ENCODE measurements at regions of chr7 and their contacts with region 1.

Region 1: GRCh38 chr7:134690016-134690415 is 43.4 kb downstream of the BPGM start:
- DNase-seq: no peak
- H3K4me3 ChIP-seq: peak overlapping the region in 2 of 4 donors; percentile 6 to 34
- H3K27ac ChIP-seq: peak overlapping the region; percentile 66 to 82 (median 76)
- H3K4me1 ChIP-seq: peaks cover 0 to 11% (median 6%) of the 10 kb centered on the region in 4 donors
- H3K27me3 ChIP-seq: no peaks in the 10 kb centered on the region
- CTCF ChIP-seq: peak; percentile 20 to 60 (median 33)
- EP300 ChIP-seq: no peak
- POLR2A ChIP-seq: no peak

Region 2: GRCh38 chr7:134212576-134213546 is 477.2 kb before region 1 on chr7:
- in situ Hi-C with region 1: no loop called
- intact Hi-C with region 1: no loop called
- DNase-seq: no peak
- H3K4me3 ChIP-seq: no peak overlapping the region
- H3K27ac ChIP-seq: no peak overlapping the region
- H3K4me1 ChIP-seq: no peaks in the 10 kb centered on the region
- H3K27me3 ChIP-seq: no peaks in the 10 kb centered on the region
- CTCF ChIP-seq: no peak
- EP300 ChIP-seq: no peak
- POLR2A ChIP-seq: no peak

Region 3: DNA sequence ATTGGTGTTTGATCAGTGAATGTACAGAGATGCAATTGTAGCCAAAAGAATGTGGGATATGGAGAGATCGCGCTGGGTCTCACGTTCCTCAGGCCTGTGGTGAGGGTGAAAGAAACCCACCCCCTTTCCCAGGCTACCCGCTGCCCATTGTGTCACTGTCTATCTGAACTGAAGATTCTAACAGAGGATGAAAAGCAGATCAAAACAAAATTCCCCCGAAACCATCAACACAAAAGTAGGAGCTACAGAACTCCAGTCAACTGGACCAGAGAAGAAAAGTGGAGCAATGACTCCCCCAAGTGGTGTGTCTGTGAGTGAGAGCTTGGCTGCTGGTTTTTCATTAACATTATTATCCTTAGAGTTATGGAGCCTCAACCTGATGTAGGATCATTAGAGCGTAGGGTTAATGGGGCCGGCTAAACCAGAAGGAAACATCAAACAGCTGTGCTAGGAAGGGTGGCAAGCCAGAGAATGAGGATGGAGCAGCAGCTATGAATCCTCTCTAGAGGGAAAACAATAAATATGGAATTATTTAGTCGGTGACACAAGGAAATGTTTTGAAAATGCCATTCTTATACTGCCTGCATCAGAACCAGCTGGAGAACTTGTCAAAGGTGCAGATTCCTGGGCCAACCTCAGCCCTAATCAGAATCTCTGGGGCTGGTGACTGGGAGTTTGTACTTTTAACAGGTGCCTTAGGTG is 269.4 kb before region 1 on chr7:
- in situ Hi-C with region 1: no loop called
- intact Hi-C with region 1: no loop called
- DNase-seq: peak; percentile 54
- H3K4me3 ChIP-seq: no peak overlapping the region
- H3K27ac ChIP-seq: no peak overlapping the region
- H3K4me1 ChIP-seq: peaks cover 0 to 23% (median 0%) of the 10 kb centered on the region in 4 donors
- H3K27me3 ChIP-seq: no peaks in the 10 kb centered on the region
- CTCF ChIP-seq: peak; percentile 53 to 68 (median 58)
- EP300 ChIP-seq: no peak
- POLR2A ChIP-seq: no peak

Region 4: DNA sequence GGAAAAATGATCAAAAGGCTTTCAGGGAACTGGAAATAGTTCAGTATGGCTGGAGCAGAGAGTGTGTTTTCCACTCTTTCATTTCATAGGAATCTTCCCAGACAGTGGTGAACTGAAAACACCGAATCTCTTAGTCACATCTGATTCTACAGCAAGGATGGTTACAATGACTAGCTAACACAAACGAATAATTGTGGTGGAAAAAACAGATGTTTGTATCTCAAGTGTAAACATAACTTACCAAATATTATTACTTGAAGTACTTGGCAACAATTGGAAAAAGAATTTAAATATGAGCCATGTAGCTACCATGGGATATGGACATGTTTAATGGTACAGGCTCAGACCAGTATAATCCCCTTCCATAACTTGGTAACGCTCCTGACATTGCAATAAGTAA is 64.5 kb before region 1 on chr7:
- in situ Hi-C with region 1: no loop called
- intact Hi-C with region 1: no loop called
- DNase-seq: no peak
- H3K4me3 ChIP-seq: no peak overlapping the region
- H3K27ac ChIP-seq: no peak overlapping the region
- H3K4me1 ChIP-seq: no peaks in the 10 kb centered on the region
- H3K27me3 ChIP-seq: peaks cover 20% of the 10 kb centered on the region
- CTCF ChIP-seq: no peak
- EP300 ChIP-seq: no peak
- POLR2A ChIP-seq: no peak

Region 5: GRCh38 chr7:134741907-134742635 is 52.1 kb after region 1 on chr7:
- in situ Hi-C with region 1: no loop called
- intact Hi-C with region 1: loop called (anchors 10 kb)
- DNase-seq: no peak
- H3K4me3 ChIP-seq: no peak overlapping the region
- H3K27ac ChIP-seq: peak overlapping the region; percentile 67 to 76 (median 68)
- H3K4me1 ChIP-seq: peaks cover 0 to 7% (median 7%) of the 10 kb centered on the region in 4 donors
- H3K27me3 ChIP-seq: no peaks in the 10 kb centered on the region
- CTCF ChIP-seq: no peak
- EP300 ChIP-seq: no peak
- POLR2A ChIP-seq: no peak

Region 6: GRCh38 chr7:134943764-134944400 is 253.9 kb after region 1 on chr7:
- in situ Hi-C with region 1: no loop called
- intact Hi-C with region 1: loop called (anchors 10 kb)
- DNase-seq: no peak
- H3K4me3 ChIP-seq: no peak overlapping the region
- H3K27ac ChIP-seq: no peak overlapping the region
- H3K4me1 ChIP-seq: no peaks in the 10 kb centered on the region
- H3K27me3 ChIP-seq: no peaks in the 10 kb centered on the region
- CTCF ChIP-seq: no peak
- EP300 ChIP-seq: no peak
- POLR2A ChIP-seq: no peak

Region 7: GRCh38 chr7:134954197-134955082 is 264.4 kb after region 1 on chr7:
- in situ Hi-C with region 1: loop called in 1 of 4 experiments (anchors 25 kb)
- intact Hi-C with region 1: loop called (anchors 10 kb)
- DNase-seq: no peak
- H3K4me3 ChIP-seq: no peak overlapping the region
- H3K27ac ChIP-seq: no peak overlapping the region
- H3K4me1 ChIP-seq: no peaks in the 10 kb centered on the region
- H3K27me3 ChIP-seq: no peaks in the 10 kb centered on the region
- CTCF ChIP-seq: peak; percentile 39 to 55 (median 53)
- EP300 ChIP-seq: no peak
- POLR2A ChIP-seq: no peak

Region 8: GRCh38 chr7:135170274-135170997 is 480.4 kb after region 1 on chr7 and contains the start of gene CYREN:
- in situ Hi-C with region 1: loop called in 1 of 4 experiments (anchors 25 kb)
- intact Hi-C with region 1: loop called (anchors 10 kb)
- DNase-seq: peak; percentile 96
- H3K4me3 ChIP-seq: peak within 1 kb of the TSS; percentile 60 to 83 (median 69)
- H3K27ac ChIP-seq: peak within 1 kb of the TSS; percentile 92 to 97 (median 96)
- H3K4me1 ChIP-seq: peaks cover 13 to 36% (median 25%) of the 10 kb centered on the region in 4 donors
- H3K27me3 ChIP-seq: no peaks in the 10 kb centered on the region
- CTCF ChIP-seq: peak; percentile 61 to 77 (median 72)
- EP300 ChIP-seq: no peak
- POLR2A ChIP-seq: peak; percentile 77
- total RNA-seq, gene CYREN: 30.8 to 88.3 (median 37.8) TPM

Region 9: DNA sequence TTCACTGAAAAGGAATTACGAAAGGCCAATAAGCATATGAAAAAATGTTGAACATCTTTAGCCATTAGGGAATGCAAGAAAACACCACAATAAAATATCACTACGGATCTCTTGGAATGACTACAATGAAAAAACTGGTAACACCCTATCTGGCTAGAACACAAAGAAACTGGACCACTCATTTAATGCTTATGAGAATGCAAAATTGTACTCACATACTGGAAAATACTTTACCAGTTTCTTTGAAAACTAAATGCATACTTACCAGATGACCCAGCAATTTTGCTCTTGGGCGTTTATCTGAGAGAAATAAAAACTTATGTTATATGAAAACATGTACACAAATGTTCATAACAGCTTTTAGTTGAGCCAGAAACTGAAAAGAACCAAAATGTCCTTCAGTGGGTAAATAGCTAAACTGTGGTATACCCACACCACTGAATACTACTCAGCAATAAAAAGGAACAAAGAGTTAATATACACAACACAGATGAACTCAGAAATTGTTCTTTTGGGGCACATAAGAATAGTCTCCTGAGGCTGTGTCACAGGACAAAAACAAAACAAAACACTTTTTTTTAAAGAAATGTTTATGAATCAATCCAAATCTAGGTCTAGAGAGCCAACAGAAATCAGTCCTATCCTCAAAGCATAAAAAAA is 796.4 kb after region 1 on chr7:
- in situ Hi-C with region 1: no loop called
- intact Hi-C with region 1: no loop called
- DNase-seq: no peak
- H3K4me3 ChIP-seq: no peak overlapping the region
- H3K27ac ChIP-seq: no peak overlapping the region
- H3K4me1 ChIP-seq: peaks cover 0 to 15% (median 6%) of the 10 kb centered on the region in 4 donors
- H3K27me3 ChIP-seq: no peaks in the 10 kb centered on the region
- CTCF ChIP-seq: no peak
- EP300 ChIP-seq: no peak
- POLR2A ChIP-seq: no peak